ENCODE measurements at regions of chr2 and their contacts with region 1.

Region 1: GRCh38 chr2:113910110-113910717 is 20.3 kb downstream of the ACTR3 start:
- DNase-seq: no peak
- H3K4me3 ChIP-seq: no peak overlapping the region
- H3K27ac ChIP-seq: no peak overlapping the region
- H3K4me1 ChIP-seq: peaks cover 0 to 15% of the 10 kb centered on the region in 2 donors
- H3K27me3 ChIP-seq: no peaks in the 10 kb centered on the region
- CTCF ChIP-seq: no peak

Region 2: DNA sequence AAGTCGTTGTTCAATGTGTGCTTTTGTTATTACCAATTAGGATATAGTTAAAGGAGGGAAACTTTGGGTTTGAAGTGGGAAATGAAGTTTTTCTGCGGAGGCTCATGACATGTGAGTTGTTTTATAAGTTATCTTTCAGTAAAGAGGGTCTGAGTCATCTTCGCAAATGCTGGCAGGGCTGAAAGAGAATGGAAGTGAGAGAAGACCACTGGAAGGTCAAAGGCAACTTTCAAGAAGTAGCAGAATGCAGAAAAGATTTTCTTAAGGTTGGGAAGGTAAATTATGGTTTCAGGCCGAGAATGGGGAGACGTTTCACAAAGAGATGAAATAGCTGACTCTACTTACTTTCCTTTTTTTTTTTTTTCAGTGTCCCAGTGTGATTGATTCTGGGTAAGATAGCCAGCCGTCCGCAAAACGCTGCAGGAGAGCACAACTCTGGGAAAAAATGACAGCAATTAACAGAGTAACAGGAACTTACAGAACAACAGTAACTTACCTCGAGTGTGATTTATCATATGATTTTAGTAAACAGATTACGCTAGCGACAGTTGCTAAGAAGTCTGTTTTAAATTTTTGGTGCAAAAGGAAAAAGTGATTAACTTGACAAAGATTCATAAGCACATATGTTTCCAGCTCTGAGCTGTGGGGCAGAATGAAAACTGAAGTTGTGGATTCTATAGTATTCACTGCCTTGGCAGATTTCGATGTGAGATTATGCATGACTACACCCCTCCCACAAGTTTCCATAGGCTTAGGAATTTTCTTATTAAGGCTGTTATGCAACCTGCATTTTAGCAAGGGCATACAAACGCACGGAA is 67.1 kb before region 1 on chr2:
- intact Hi-C with region 1: no loop called
- DNase-seq: no peak
- H3K4me3 ChIP-seq: no peak overlapping the region
- H3K27ac ChIP-seq: no peak overlapping the region
- H3K4me1 ChIP-seq: no peaks in the 10 kb centered on the region
- H3K27me3 ChIP-seq: no peaks in the 10 kb centered on the region
- CTCF ChIP-seq: no peak

Region 3: GRCh38 chr2:113930448-113930847 is 20.2 kb after region 1 on chr2:
- intact Hi-C with region 1: no loop called
- DNase-seq: no peak
- H3K4me3 ChIP-seq: no peak overlapping the region
- H3K27ac ChIP-seq: no peak overlapping the region
- H3K4me1 ChIP-seq: no peaks in the 10 kb centered on the region
- H3K27me3 ChIP-seq: no peaks in the 10 kb centered on the region
- CTCF ChIP-seq: no peak

Region 4: GRCh38 chr2:113965644-113966043 is 55.4 kb after region 1 on chr2:
- intact Hi-C with region 1: loop called (anchors 10 kb)
- DNase-seq: no peak
- H3K4me3 ChIP-seq: no peak overlapping the region
- H3K27ac ChIP-seq: no peak overlapping the region
- H3K4me1 ChIP-seq: no peaks in the 10 kb centered on the region
- H3K27me3 ChIP-seq: no peaks in the 10 kb centered on the region
- CTCF ChIP-seq: peak in 1 of 3 experiments; percentile 36

Region 5: GRCh38 chr2:114156366-114157056 is 246.3 kb after region 1 on chr2:
- intact Hi-C with region 1: no loop called
- DNase-seq: no peak
- H3K4me3 ChIP-seq: no peak overlapping the region
- H3K27ac ChIP-seq: no peak overlapping the region
- H3K4me1 ChIP-seq: no peaks in the 10 kb centered on the region
- H3K27me3 ChIP-seq: no peaks in the 10 kb centered on the region
- CTCF ChIP-seq: no peak

Measured in ascending aorta (tissue), 2 donors.